ENCODE measurements at regions of chr2 and their contacts with region 1.

Region 1: DNA sequence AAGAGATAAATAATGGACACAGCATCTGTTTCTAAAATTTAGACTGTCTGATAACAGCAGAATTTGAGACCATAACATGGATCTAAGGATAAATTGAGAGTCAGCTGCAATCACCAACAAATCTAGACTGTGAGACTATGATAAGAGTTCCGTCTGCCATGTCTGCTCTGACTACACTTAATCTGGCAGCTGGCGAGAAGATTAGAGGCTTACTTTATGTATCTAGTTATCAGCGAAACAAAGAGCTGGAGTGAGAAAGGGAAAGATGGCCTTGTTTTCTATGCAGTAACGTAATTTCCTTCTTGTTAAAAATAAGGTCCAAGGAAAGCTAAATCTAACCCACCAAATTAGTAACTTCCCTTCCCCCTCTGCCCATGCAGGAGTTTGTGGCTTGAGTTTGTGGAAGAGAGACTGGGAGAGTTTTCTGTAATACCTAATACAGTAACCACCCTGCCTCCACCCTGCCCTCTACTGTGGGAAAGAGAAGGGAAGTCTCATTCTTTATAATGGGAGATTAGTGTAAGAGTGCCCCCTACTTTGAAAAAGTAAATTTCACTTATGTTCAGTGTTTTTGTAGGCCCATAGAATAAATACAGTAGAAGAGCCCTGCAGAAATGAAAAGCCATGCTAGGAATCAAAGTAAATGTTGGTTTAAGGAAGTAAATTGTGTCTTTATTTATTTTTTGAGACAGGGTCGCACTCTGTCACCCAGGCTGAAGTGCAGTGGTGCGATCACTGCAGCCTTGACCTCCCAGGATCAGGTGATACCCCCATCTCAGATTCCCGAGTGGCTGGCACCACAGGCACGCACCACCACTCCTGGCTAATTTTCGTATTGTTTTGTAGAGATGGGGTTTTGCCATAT is 27.5 kb downstream of the EML4 start:
- DNase-seq: peak; percentile 60
- ATAC-seq: peak; percentile 86
- H3K4me3 Mint-ChIP-seq: no peak overlapping the region
- H3K27ac Mint-ChIP-seq: peak overlapping the region; percentile 35
- H3K4me1 Mint-ChIP-seq: peaks cover 52% of the 10 kb centered on the region
- H3K27me3 Mint-ChIP-seq: no peaks in the 10 kb centered on the region

Region 2: DNA sequence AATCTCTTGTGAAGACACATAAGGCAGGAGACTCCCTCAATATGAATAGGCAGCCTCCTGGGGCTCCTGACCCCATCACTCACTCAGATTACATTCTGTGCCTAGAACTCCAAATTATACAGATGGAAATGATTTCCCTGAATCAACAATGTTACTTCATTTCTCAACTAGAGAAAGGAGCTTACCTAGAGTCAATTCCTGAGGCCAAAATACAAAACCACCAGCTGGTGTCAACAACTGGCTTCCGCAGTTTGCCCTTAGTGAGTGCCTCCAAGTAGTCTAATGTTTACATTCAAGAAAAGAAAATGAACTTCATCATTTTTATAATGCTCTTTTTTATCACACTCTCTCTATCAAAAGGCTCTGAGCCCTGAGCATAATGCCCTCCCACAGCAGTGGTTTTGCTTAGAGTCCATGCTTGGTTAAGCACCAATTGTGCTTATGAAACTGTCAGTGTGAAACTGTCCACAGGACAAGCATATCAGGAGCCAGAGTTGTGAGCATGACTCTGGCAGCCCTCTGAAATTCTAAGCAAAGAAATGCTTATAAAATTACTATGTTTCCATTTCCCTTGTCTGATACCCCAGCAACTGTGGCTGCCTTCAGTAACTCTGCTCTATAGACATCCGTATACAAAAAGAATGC is 454.6 kb before region 1 on chr2:
- CTCF ChIA-PET with region 1: no interaction called
- POLR2A ChIA-PET with region 1: no interaction called
- DNase-seq: no peak
- ATAC-seq: no peak
- H3K4me3 Mint-ChIP-seq: no peak overlapping the region
- H3K27ac Mint-ChIP-seq: no peak overlapping the region
- H3K4me1 Mint-ChIP-seq: no peaks in the 10 kb centered on the region
- H3K27me3 Mint-ChIP-seq: no peaks in the 10 kb centered on the region

Region 3: DNA sequence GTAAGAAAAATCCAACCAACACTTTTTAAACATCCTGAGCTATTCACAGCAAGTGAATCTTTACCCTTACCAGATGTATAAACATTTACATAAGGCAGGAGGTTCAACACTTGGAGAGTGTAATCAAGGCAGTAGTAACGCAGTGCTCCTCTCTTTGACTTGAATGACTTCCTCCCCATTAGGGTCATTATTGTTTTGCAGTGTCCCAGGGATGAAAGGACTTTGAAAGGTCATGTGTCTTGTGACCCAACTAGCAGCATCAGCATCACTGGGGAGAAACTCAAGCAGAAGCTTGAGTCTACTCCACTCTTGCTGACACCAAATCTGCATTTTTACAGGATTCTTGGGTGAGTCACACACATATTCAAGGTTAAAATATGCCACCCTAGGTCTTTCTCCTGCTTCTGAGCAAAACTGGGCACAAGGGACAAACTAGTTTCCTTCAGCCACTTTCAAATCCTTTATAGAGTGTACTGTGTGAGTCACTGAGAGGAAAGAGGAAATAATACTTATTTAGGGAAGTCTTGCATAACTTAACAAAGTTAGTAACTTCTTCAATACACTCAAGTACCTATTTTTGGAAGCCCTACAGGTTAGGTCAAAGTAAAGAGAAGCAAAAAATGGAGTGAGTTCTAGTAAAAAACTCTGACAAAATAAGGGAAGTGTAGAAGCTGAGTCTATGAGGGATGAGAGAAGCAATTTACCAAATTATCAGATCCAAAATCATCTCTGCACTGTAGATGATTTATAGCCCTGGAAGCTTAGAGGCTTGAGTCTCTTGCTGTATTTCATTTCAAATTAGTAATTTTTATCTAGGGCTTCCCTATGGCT is 78.5 kb before region 1 on chr2:
- CTCF ChIA-PET with region 1: interaction called, 10 read pairs
- POLR2A ChIA-PET with region 1: no interaction called
- DNase-seq: no peak
- ATAC-seq: peak; percentile 67
- H3K4me3 Mint-ChIP-seq: no peak overlapping the region
- H3K27ac Mint-ChIP-seq: peak overlapping the region; percentile 41
- H3K4me1 Mint-ChIP-seq: peaks cover 39% of the 10 kb centered on the region
- H3K27me3 Mint-ChIP-seq: peaks cover 2% of the 10 kb centered on the region

Region 4: DNA sequence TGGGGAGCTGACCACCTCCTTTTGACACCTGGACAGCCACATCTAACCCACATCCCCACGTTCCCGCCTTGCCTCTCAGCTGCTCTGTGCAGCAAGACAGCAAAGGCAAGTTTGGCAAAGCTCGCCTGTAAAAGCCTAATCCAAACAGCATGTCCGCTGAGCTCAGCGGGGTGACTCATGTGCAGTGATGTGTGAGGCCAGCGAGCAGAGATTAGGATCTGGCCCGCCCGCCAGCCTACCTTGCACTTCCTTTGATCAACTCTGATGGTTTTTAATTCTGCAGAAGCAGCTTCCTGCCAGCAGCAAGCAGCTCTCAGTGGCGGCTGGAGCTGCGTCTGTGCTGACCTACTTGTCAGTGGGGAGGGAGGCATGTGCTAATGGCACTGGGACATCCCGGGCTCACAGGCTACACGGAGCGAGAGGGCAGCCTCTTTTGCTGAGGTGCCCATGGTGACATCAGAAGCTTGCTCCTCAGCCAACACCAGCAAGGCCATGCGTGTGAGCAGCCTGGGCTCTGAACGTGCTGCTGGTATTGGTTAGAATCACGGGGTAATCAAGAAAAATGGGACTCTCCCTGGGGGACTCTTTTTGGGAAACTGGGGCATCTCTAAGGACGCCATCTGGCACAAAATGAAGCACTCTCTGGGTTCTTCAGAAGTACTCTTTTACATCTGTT is 63.5 kb before region 1 on chr2:
- CTCF ChIA-PET with region 1: interaction called, 10 read pairs
- POLR2A ChIA-PET with region 1: no interaction called
- DNase-seq: peak; percentile 96
- ATAC-seq: peak; percentile 92
- H3K4me3 Mint-ChIP-seq: peak overlapping the region; percentile 65
- H3K27ac Mint-ChIP-seq: peak overlapping the region; percentile 95
- H3K4me1 Mint-ChIP-seq: peaks cover 89% of the 10 kb centered on the region
- H3K27me3 Mint-ChIP-seq: no peaks in the 10 kb centered on the region

Region 5: GRCh38 chr2:42169100-42169873 is 27.3 kb before region 1 on chr2 and contains the start of gene EML4:
- CTCF ChIA-PET with region 1: interaction called, 14 read pairs
- POLR2A ChIA-PET with region 1: interaction called, 3 read pairs
- DNase-seq: peak; percentile 91
- ATAC-seq: peak; percentile 88
- H3K4me3 Mint-ChIP-seq: no peak within 1 kb of the TSS
- H3K27ac Mint-ChIP-seq: no peak within 1 kb of the TSS
- H3K4me1 Mint-ChIP-seq: peaks cover 23% of the 10 kb centered on the region
- H3K27me3 Mint-ChIP-seq: peaks cover 2% of the 10 kb centered on the region
- total RNA-seq, gene EML4: 88.0 to 89.7 TPM

Region 6: GRCh38 chr2:42328148-42328833 is 131.7 kb after region 1 on chr2:
- CTCF ChIA-PET with region 1: interaction called, 13 read pairs
- POLR2A ChIA-PET with region 1: no interaction called
- DNase-seq: no peak
- ATAC-seq: peak; percentile 55
- H3K4me3 Mint-ChIP-seq: no peak overlapping the region
- H3K27ac Mint-ChIP-seq: no peak overlapping the region
- H3K4me1 Mint-ChIP-seq: no peaks in the 10 kb centered on the region
- H3K27me3 Mint-ChIP-seq: no peaks in the 10 kb centered on the region

Measured in activated CD8-positive, alpha-beta T cell treated with anti-CD3 and anti-CD28 coated beads, Interleukin-2, amount 10 ng/mL, durations not matched to agents 7 days and 5 days (primary cell).